GM18951 (cell line): ENCODE measurements at regions of chr14 and their contacts with region 1.

Region 1: GRCh38 chr14:51283402-51284085 is 43.5 kb downstream of the TMX1 start:
- POLR2A ChIP-seq: no peak

Region 2: DNA sequence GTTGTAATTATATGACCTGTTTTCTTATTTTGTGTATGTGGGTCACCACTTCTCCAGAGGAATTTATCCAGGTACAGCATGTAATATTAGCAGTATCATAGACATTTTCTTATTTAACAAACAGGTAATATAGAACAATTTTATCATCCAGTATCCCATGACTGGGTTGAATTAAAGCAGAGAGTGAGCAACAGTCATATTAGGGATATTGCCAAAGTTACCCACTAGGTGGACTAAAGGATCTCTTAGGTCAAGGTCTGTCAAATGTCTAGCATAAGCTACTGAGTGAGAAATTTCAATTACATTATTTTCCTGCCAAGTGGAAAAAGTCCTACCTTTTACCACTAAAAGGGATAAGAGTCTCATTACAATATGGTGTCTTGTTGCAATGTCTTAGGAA is 126.5 kb before region 1 on chr14:
- in situ Hi-C with region 1: no loop called
- POLR2A ChIP-seq: no peak

Region 3: DNA sequence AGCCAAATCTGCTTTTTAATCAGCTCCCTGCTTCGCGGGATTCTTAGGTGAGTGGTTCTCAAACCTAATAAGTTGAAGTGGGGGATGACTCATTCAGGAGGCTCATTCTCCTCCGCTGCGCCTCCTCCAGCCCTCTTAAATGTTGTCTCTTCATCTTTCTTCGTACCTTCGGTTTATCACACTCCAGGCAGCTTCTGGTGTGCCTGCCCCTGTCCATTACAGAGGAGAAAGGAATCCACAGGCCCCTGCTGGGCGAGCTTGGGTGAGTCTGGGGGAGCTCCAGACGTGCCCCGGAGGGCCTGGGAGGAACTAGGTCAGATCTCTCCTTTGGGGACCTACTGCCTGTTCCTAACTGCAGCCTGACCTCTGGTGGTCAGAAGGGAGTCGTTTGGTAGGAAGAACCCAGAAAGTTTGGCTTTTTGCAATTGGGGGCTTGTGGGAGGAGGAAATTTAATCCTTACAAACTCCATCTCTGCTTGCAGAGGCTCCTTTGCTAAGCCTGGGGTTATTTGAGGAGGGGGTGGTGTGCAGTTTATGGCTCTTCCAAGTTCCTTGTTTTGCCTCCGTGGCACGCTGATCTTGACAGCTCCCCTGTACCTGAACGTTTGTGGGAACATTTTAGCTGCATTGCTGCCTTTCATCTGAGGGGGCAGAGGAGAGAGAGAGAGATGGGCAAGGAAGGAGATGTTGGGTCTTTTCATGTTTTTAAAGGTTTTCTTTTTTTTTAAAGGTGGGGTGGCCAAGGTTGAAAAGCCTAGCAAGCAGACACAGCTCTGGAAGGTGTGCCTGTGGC is 492.8 kb after region 1 on chr14:
- in situ Hi-C with region 1: loop called (anchors 10 kb)
- POLR2A ChIP-seq: no peak